Colonic mucosa (tissue), 4 donors: ENCODE measurements at regions of chr6 and their contacts with region 1.

Region 1: GRCh38 chr6:786946-787763 is 94.2 kb upstream of the EXOC2 start:
- DNase-seq: no peak
- H3K4me3 ChIP-seq: no peak overlapping the region
- H3K27ac ChIP-seq: no peak overlapping the region
- H3K4me1 ChIP-seq: no peaks in the 10 kb centered on the region
- H3K27me3 ChIP-seq: no peaks in the 10 kb centered on the region
- CTCF ChIP-seq: peak; percentile 62

Region 2: DNA sequence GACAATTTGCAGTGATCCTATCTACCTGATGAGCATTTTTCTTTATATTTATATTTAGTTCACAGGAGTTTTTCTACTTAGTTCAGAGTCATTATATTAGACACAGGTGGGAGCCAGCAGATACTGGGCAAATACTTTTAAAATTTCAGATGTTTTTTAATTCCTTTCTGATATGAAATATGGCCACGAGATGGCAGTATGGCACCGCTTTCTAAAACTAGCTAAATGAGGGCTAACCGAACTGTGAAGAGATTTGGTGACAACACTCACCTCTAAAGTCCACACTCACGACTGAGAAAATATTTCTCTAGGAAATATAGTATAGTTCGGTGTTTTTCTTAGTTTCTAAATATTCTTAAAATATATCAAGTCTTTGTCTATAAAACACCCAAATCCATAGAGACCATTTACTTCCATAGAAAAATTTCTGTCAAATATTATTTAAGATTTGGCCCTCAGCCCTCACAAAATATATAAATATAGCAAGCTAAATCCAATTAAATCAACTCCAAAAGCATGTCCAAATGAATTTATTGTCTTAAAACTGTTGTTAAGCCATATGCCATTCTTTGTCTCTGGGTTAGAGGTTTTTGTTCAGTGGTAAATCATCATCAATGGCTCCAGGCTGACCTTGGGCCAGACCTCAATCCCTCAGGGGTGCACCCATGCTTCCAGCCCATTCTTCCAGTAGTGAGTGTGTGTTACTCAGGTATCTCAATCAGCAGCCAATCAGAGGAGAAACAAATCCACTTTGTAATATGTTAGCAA is 193.8 kb before region 1 on chr6:
- intact Hi-C with region 1: loop called (anchors 5 kb)
- DNase-seq: peak; percentile 55
- H3K4me3 ChIP-seq: no peak overlapping the region
- H3K27ac ChIP-seq: no peak overlapping the region
- H3K4me1 ChIP-seq: no peaks in the 10 kb centered on the region
- H3K27me3 ChIP-seq: no peaks in the 10 kb centered on the region
- CTCF ChIP-seq: peak; percentile 61

Region 3: GRCh38 chr6:1029141-1029540 is 242.0 kb after region 1 on chr6:
- intact Hi-C with region 1: no loop called
- DNase-seq: no peak
- H3K4me3 ChIP-seq: no peak overlapping the region
- H3K27ac ChIP-seq: no peak overlapping the region
- H3K4me1 ChIP-seq: no peaks in the 10 kb centered on the region
- H3K27me3 ChIP-seq: no peaks in the 10 kb centered on the region
- CTCF ChIP-seq: no peak